B cell (primary cell): ENCODE measurements at regions of chr2 and their contacts with region 1.

Region 1: DNA sequence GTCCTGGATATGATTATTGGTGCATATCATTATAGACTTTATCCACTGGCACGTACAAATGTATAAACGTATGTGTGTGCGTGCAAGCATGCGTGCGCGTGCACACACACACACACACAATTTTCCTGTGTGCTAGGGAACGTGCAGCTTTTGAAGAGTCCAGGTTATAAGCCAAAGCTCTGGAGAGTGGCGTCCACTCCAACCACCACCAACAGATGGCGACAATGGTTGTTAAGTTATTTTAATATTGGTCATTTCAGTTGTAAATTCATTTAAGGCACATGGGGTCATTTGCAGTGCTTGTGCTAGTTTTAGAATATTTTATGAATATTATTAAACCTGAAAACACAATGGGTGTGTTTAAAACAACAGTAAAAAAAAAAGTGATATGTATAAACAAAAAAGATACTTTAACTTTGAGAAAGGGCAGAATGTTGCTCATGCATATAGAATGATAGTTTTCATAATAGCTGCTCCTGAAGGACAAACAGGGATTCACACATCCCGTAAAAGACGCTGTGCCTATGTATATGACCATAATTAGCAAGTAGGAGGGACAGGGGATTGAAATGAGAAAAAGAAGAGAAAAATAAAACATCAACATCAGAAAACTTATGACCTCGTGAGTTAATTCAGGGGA is 124.2 kb upstream of the ITGB6 start:
- DNase-seq: peak; percentile 55
- ATAC-seq: peak; percentile 14
- H3K4me3 ChIP-seq: no peak overlapping the region
- H3K4me3 Mint-ChIP-seq: no peak overlapping the region
- H3K27ac ChIP-seq: no peak overlapping the region
- H3K27ac Mint-ChIP-seq: no peak overlapping the region
- H3K4me1 ChIP-seq: peaks cover 4 to 14% of the 10 kb centered on the region in 2 donors
- H3K4me1 Mint-ChIP-seq: peaks cover 56% of the 10 kb centered on the region
- H3K27me3 ChIP-seq: no peaks in the 10 kb centered on the region
- H3K27me3 Mint-ChIP-seq: no peaks in the 10 kb centered on the region
- CTCF ChIP-seq: peak; percentile 81

Region 2: DNA sequence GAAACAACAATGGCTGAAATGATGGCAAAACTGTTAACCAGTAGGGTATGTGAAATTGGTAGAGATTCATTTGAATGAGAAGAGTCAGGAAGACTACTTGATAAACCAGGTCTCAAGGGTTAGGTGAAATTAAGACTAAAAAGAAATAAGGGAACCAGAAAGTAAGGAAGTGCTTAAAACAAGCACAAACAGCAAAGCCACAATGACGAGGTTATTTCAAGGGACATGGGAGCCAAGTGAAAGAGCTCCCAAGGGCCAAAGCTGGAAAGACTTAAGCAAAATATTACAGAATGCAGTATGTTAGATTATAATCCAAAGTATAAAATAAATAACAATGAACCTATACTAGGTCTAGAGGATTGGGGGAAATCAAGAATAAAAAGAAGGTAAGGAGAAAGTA is 507.0 kb before region 1 on chr2:
- CTCF ChIA-PET with region 1: no interaction called
- POLR2A ChIA-PET with region 1: no interaction called
- intact Hi-C with region 1: no loop called
- DNase-seq: no peak
- ATAC-seq: no peak
- H3K4me3 ChIP-seq: no peak overlapping the region
- H3K4me3 Mint-ChIP-seq: no peak overlapping the region
- H3K27ac ChIP-seq: no peak overlapping the region
- H3K27ac Mint-ChIP-seq: no peak overlapping the region
- H3K4me1 ChIP-seq: no peaks in the 10 kb centered on the region
- H3K4me1 Mint-ChIP-seq: no peaks in the 10 kb centered on the region
- H3K27me3 ChIP-seq: no peaks in the 10 kb centered on the region
- H3K27me3 Mint-ChIP-seq: no peaks in the 10 kb centered on the region
- CTCF ChIP-seq: no peak

Region 3: GRCh38 chr2:160353166-160353565 is 28.9 kb after region 1 on chr2:
- CTCF ChIA-PET with region 1: interaction called, 21 read pairs
- POLR2A ChIA-PET with region 1: no interaction called
- intact Hi-C with region 1: no loop called
- DNase-seq: peak; percentile 49
- ATAC-seq: peak; percentile 60
- H3K4me3 ChIP-seq: no peak overlapping the region
- H3K4me3 Mint-ChIP-seq: no peak overlapping the region
- H3K27ac ChIP-seq: no peak overlapping the region
- H3K27ac Mint-ChIP-seq: no peak overlapping the region
- H3K4me1 ChIP-seq: no peaks in the 10 kb centered on the region
- H3K4me1 Mint-ChIP-seq: peaks cover 11% of the 10 kb centered on the region
- H3K27me3 ChIP-seq: no peaks in the 10 kb centered on the region
- H3K27me3 Mint-ChIP-seq: no peaks in the 10 kb centered on the region
- CTCF ChIP-seq: peak; percentile 68

Region 4: DNA sequence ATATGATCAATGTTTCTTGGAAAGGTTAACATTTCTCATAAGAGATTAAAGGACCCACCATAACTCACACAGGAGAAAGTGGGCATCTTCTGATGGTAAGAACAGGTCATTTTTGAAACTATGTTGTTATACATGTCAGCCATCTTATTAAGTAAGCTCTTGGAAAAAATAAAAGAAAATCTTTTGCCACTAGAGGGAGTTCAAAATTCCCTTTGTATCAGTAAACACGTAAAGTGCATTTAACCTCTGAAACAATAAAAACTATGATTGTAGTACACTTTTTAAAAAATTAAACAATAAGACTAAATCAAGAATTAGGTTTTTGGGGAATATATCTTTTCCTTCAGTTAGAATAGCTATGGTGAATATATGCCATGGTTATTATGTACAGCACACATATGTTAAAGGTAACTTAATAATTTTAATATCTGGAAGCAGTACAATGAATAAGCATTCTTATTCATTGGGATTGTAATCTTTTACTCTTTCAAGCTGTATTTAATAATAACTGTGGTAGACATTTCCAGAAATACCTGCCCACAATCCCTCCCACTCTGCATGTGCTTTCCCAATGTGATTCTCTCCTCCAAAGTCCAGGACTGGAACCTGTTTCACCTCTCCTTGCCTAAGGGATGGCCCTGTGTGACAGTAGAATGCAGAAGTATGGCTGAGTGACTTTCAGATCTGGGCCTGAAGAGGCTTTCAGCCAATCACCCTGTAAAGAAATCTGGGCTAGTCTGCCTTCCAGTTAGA is 105.1 kb after region 1 on chr2:
- CTCF ChIA-PET with region 1: interaction called, 11 read pairs
- POLR2A ChIA-PET with region 1: no interaction called
- intact Hi-C with region 1: no loop called
- DNase-seq: peak; percentile 70
- ATAC-seq: no peak
- H3K4me3 ChIP-seq: no peak overlapping the region
- H3K4me3 Mint-ChIP-seq: no peak overlapping the region
- H3K27ac ChIP-seq: no peak overlapping the region
- H3K27ac Mint-ChIP-seq: peak overlapping the region; percentile 32
- H3K4me1 ChIP-seq: peaks cover 30 to 35% of the 10 kb centered on the region in 2 donors
- H3K4me1 Mint-ChIP-seq: peaks cover 35% of the 10 kb centered on the region
- H3K27me3 ChIP-seq: no peaks in the 10 kb centered on the region
- H3K27me3 Mint-ChIP-seq: no peaks in the 10 kb centered on the region
- CTCF ChIP-seq: peak; percentile 78

Region 5: DNA sequence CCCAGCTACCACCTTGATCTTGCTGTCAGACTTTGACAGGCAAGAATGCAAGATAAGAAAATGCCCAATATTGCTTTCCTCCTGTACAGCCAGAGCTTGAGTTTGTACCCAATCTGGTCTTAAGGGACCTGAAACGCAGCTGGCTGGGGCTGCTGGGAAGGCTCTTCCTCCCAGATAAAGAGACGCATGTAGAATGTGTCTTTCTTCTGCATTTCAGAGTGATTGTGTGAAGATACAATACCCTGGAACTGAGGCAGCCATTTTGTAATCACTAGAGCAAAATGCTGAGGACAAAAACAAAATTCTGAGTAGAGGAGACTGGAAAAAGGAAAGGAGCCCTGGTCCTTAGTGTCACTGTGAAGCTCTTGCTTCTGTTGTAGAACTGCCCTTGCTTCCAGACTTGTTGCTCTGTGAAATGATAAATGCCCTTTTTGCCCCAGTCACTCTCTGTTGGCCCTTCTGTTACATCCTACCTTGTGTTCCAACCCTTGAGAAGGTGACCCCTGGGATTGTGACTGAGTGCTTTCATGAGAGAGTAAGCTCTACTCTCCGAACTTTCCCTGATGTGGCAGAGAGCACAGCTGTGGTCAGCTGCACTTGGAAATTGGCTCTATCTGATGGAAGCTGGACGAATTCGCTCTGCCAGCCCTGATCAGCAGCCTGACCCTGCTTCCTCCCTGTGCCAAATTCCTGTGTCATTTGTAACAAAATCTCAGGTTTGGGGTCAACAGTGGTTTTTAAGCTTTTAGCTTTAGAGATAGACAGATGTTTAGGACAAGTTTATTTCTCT is 306.7 kb after region 1 on chr2:
- CTCF ChIA-PET with region 1: no interaction called
- POLR2A ChIA-PET with region 1: no interaction called
- intact Hi-C with region 1: no loop called
- DNase-seq: no peak
- ATAC-seq: no peak
- H3K4me3 ChIP-seq: no peak overlapping the region
- H3K4me3 Mint-ChIP-seq: no peak overlapping the region
- H3K27ac ChIP-seq: no peak overlapping the region
- H3K27ac Mint-ChIP-seq: no peak overlapping the region
- H3K4me1 ChIP-seq: no peaks in the 10 kb centered on the region
- H3K4me1 Mint-ChIP-seq: no peaks in the 10 kb centered on the region
- H3K27me3 ChIP-seq: no peaks in the 10 kb centered on the region
- H3K27me3 Mint-ChIP-seq: peaks cover 12% of the 10 kb centered on the region
- CTCF ChIP-seq: no peak

Region 6: GRCh38 chr2:160970052-160970965 is 646.0 kb after region 1 on chr2:
- CTCF ChIA-PET with region 1: interaction called, 35 read pairs
- POLR2A ChIA-PET with region 1: no interaction called
- intact Hi-C with region 1: no loop called
- DNase-seq: peak; percentile 15
- ATAC-seq: no peak
- H3K4me3 ChIP-seq: no peak overlapping the region
- H3K4me3 Mint-ChIP-seq: no peak overlapping the region
- H3K27ac ChIP-seq: no peak overlapping the region
- H3K27ac Mint-ChIP-seq: no peak overlapping the region
- H3K4me1 ChIP-seq: no peaks in the 10 kb centered on the region
- H3K4me1 Mint-ChIP-seq: no peaks in the 10 kb centered on the region
- H3K27me3 ChIP-seq: no peaks in the 10 kb centered on the region
- H3K27me3 Mint-ChIP-seq: peaks cover 15% of the 10 kb centered on the region
- CTCF ChIP-seq: peak; percentile 36

Region 7: GRCh38 chr2:161273038-161273760 is 948.9 kb after region 1 on chr2:
- CTCF ChIA-PET with region 1: interaction called, 4 read pairs
- POLR2A ChIA-PET with region 1: no interaction called
- intact Hi-C with region 1: loop called (anchors 10 kb)
- DNase-seq: peak; percentile 76
- ATAC-seq: peak; percentile 39
- H3K4me3 ChIP-seq: no peak overlapping the region
- H3K4me3 Mint-ChIP-seq: no peak overlapping the region
- H3K27ac ChIP-seq: no peak overlapping the region
- H3K27ac Mint-ChIP-seq: no peak overlapping the region
- H3K4me1 ChIP-seq: no peaks in the 10 kb centered on the region
- H3K4me1 Mint-ChIP-seq: no peaks in the 10 kb centered on the region
- H3K27me3 ChIP-seq: no peaks in the 10 kb centered on the region
- H3K27me3 Mint-ChIP-seq: no peaks in the 10 kb centered on the region
- CTCF ChIP-seq: peak; percentile 98